Caco-2 (cell line): ENCODE measurements at regions of chr12 and their contacts with region 1.

Region 1: GRCh38 chr12:69835083-69835482 is 10.1 kb downstream of the MYRFL start:
- DNase-seq: no peak
- H3K4me3 ChIP-seq: no peak overlapping the region
- H3K4me3 Mint-ChIP-seq: no peak overlapping the region
- H3K27ac Mint-ChIP-seq: no peak overlapping the region
- H3K4me1 ChIP-seq: peaks cover 7% of the 10 kb centered on the region
- H3K4me1 Mint-ChIP-seq: no peaks in the 10 kb centered on the region
- H3K27me3 ChIP-seq: no peaks in the 10 kb centered on the region
- H3K27me3 Mint-ChIP-seq: peaks cover 5% of the 10 kb centered on the region
- CTCF ChIP-seq: no peak

Region 2: GRCh38 chr12:69851976-69852375 is 16.9 kb after region 1 on chr12:
- CTCF ChIA-PET with region 1: no interaction called
- POLR2A ChIA-PET with region 1: interaction called, 11 read pairs
- intact Hi-C with region 1: no loop called
- DNase-seq: no peak
- H3K4me3 ChIP-seq: no peak overlapping the region
- H3K4me3 Mint-ChIP-seq: no peak overlapping the region
- H3K27ac Mint-ChIP-seq: no peak overlapping the region
- H3K4me1 ChIP-seq: no peaks in the 10 kb centered on the region
- H3K4me1 Mint-ChIP-seq: no peaks in the 10 kb centered on the region
- H3K27me3 ChIP-seq: no peaks in the 10 kb centered on the region
- H3K27me3 Mint-ChIP-seq: no peaks in the 10 kb centered on the region
- CTCF ChIP-seq: no peak

Region 3: DNA sequence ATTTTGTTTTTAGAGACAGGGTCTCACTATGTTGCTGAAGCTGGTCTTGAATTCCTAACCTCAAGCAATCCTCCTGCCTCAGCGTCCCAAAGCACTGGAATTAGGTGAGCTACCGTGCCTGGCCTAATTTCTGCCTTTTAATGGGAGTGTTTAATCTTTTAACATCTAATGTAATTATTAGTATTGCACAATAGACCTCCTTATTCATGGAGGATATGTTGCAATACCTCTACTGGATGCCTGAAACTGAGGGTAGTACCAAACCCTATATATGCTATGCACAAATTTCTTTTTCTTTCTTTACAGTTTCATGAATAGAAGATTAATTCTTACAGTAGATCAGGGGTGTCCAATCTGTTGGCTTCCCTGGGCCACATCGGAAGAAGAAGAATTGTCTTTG is 37.7 kb after region 1 on chr12:
- CTCF ChIA-PET with region 1: interaction called, 12 read pairs
- POLR2A ChIA-PET with region 1: no interaction called
- intact Hi-C with region 1: no loop called
- DNase-seq: no peak
- H3K4me3 ChIP-seq: no peak overlapping the region
- H3K4me3 Mint-ChIP-seq: no peak overlapping the region
- H3K27ac Mint-ChIP-seq: no peak overlapping the region
- H3K4me1 ChIP-seq: no peaks in the 10 kb centered on the region
- H3K4me1 Mint-ChIP-seq: no peaks in the 10 kb centered on the region
- H3K27me3 ChIP-seq: no peaks in the 10 kb centered on the region
- H3K27me3 Mint-ChIP-seq: peaks cover 15% of the 10 kb centered on the region
- CTCF ChIP-seq: no peak